ENCODE measurements at regions of chr21 and their contacts with region 1.

Region 1: DNA sequence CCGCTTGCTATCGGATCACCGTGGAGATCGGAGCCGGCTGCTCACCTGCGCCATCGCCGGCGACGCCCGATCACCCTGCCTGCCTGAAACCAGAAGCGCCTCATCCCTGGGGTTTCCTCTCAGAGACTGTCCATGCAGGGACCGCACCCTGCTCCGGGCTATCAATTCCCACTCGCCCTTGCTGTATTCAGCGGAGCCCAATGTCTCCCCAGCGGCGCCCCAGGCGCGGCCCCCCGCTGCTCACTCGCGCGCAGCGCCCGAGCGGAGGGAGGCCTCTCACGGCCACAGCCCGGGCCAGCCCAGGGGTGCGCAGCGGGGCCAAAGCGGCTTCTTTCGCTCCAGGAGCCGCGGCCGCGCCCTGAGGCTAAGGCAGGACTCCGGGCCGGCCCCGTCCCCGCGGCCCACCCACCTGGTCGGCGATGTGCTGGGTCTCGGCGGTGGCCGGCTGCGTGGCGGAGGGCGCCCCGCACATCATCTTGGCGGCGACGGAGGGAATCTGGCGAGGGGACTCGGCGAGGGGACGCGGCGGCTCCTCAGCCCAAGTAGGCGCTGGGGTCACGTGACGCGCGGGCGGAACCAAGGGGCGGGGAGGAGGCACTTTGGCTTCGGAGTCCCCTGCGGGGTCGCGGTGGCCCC is at the start of gene CSTB:
- DNase-seq: peak; percentile 88 to 92 (median 92)
- ATAC-seq: peak; percentile 67 to 85 (median 79)
- H3K4me3 ChIP-seq: peak within 1 kb of the TSS; percentile 93 to 98 (median 97)
- H3K27ac ChIP-seq: peak within 1 kb of the TSS; percentile 80 to 90 (median 87)
- H3K4me1 ChIP-seq: peaks cover 0 to 12% (median 5%) of the 10 kb centered on the region in 4 donors
- H3K27me3 ChIP-seq: no peaks in the 10 kb centered on the region
- CTCF ChIP-seq: no peak
- POLR2A ChIP-seq: peak; percentile 74
- total RNA-seq, gene CSTB: 16.6 to 137 (median 23.2) TPM

Region 2: DNA sequence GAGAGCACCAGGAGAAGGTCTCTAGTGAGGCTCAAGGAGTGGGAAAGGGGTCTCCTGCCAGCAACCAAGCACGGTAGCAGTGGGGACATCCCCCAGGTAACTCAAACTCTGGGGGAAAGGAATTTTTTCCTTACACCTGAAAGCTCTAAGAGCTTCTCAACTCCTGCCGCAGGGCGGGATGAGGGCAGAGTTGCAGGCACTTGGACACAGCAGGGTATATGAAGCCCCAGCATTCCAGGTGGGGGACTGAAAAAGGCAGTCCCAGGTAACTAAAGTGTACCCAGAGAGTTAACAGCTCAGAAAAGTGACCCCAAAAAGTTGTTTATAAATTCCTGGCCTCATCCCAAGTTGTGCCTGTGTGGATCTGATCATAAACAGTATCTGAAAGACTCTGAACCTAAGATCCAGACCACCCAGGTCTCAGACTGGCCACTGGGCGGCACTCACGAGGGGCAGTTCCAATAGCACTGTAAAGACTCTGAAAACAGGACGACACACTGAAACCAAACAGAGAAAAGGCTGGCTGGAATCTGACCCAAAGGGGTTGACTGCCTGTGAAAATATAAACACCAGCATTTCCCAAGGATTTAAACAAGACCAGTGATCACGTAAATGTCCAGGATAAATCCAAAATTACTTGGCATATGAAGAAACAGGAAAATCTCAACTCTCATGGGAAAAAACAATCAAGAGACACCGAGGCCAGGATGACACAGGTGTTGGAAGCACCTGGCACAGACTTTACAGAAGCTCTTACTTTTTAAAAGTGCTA is 164.1 kb before region 1 on chr21:
- intact Hi-C with region 1: no loop called
- DNase-seq: peak; percentile 67 to 77 (median 76)
- ATAC-seq: peak; percentile 85 to 93 (median 88)
- H3K4me3 ChIP-seq: no peak overlapping the region
- H3K27ac ChIP-seq: peak overlapping the region in 2 of 3 donors; percentile 17 to 56
- H3K4me1 ChIP-seq: peaks cover 0 to 36% (median 10%) of the 10 kb centered on the region in 4 donors
- H3K27me3 ChIP-seq: no peaks in the 10 kb centered on the region
- CTCF ChIP-seq: peak; percentile 69 to 83 (median 78)
- POLR2A ChIP-seq: no peak

Region 3: DNA sequence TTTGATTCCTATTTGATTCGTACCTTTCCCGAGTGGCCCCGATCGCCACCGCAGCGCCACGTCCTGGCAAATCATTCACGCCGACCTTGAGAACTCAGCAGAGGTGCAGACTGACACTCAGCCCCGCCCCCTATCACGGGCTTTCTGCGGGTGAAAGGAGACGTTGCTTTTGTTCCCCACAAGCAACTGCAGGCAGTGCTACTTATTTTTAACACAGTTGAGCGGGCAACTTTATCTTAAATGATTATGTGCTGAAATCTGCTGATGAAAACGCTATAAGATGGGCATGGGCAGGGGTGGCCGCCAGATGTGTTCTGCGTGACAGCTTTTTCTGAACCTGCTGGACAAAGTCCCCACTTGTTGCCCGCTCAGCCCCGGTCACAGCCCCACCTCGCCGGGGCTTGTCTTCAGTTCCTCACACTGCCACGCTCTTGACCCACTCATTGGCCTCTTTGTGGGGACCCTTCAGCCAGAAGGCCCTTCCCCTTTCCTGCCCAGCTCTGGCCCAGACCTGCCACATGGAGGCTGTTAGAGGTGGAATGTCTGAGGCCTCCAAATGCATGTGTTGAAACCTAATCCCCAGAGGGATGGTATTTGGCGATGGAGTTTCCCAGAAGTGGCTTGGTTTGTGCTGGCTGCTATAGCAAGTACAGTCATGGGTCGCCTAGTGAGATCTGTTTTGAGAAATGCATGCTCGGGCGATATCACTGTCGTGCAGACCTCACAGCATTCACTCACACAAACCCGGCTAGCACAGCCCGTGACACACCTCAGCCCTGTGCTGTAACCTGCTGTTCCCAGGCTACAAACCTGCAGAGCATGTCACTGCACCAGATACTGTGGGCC is 72.7 kb before region 1 on chr21:
- intact Hi-C with region 1: loop called in 1 of 2 experiments (anchors 10 kb)
- DNase-seq: peak in 1 of 3 donors; percentile 2
- ATAC-seq: peak in 3 of 4 donors; percentile 53 to 60 (median 59)
- H3K4me3 ChIP-seq: no peak overlapping the region
- H3K27ac ChIP-seq: no peak overlapping the region
- H3K4me1 ChIP-seq: peaks cover 0 to 3% (median 0%) of the 10 kb centered on the region in 4 donors
- H3K27me3 ChIP-seq: no peaks in the 10 kb centered on the region
- CTCF ChIP-seq: no peak
- POLR2A ChIP-seq: no peak

Region 4: DNA sequence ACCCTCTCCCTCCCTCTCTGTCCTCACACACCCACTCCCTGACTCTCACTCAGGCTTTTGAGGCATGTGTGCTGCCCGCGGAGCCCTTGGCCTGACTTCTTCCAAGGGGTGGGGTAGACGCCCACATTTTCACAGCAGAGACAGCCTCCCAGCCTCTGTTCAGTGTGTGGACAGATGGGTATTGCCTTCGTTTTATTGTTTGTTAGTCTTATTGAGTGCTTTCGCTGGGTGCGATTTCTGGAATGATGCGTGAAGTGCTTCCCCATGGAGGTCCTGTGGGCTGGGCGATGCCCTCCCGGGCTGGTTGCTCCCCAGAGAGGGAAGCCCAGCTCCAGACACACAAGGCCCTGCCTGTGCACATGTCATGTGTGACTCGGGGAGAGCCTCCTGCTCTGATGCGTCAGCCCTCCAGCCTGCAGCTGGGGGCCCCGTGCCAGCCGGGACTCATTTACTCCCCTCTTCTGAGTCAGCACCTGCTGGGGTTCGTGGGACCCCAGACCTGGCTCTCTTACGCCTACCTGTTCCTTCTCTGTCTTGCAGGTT is 42.3 kb before region 1 on chr21:
- intact Hi-C with region 1: no loop called
- DNase-seq: no peak
- ATAC-seq: no peak
- H3K4me3 ChIP-seq: no peak overlapping the region
- H3K27ac ChIP-seq: peak overlapping the region in 1 of 3 donors; percentile 29
- H3K4me1 ChIP-seq: peaks cover 0 to 85% (median 28%) of the 10 kb centered on the region in 4 donors
- H3K27me3 ChIP-seq: no peaks in the 10 kb centered on the region
- CTCF ChIP-seq: no peak
- POLR2A ChIP-seq: no peak

Measured in right lobe of liver (tissue), 6 donors.